Gastrocnemius medialis (tissue), 4 donors: ENCODE measurements at regions of chr12 and their contacts with region 1.

Region 1: DNA sequence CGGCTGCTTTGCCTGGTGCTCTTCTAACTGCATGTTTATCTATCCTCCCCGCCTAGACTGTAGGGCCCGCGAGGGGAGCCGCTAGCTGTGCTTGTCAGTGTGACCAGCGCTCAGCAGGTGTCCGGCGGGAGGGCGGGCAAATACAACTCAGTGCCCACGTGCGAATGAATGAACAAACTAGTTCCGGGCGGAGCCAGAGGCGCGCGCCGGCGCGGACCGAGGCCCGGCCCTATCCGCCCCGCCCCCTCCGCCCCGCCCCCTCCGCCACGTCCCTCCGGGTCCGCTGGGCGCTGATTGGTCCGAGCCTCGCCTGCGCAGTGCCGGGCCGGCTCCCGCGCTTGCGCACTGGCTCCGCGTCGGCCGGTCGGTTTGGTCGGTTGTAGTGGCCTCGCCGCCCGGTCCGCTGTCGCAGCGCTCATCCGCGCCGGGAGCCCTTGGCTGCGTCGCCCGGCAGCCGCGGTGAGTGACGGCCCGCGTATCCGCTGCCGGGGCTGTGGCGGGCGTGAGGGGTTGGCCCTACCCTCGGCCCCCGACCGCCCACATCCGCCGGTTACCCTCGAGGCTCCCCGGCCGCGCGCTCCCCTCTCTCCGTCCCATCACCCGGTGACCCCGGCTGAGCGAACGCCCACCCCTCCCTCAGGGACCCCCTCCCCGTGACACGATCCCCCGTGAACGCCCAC is 60.0 kb downstream of the DDX51 start:
- DNase-seq: peak; percentile 90
- ATAC-seq: peak; percentile 87 to 92
- H3K4me3 ChIP-seq: peak overlapping the region; percentile 72 to 98 (median 87)
- H3K27ac ChIP-seq: peak overlapping the region; percentile 93 to 97 (median 94)
- H3K4me1 ChIP-seq: peaks cover 17 to 22% of the 10 kb centered on the region in 2 donors
- H3K27me3 ChIP-seq: no peaks in the 10 kb centered on the region
- CTCF ChIP-seq: peak in 1 of 5 experiments; percentile 5
- POLR2A ChIP-seq: peak; percentile 94 to 96

Region 2: DNA sequence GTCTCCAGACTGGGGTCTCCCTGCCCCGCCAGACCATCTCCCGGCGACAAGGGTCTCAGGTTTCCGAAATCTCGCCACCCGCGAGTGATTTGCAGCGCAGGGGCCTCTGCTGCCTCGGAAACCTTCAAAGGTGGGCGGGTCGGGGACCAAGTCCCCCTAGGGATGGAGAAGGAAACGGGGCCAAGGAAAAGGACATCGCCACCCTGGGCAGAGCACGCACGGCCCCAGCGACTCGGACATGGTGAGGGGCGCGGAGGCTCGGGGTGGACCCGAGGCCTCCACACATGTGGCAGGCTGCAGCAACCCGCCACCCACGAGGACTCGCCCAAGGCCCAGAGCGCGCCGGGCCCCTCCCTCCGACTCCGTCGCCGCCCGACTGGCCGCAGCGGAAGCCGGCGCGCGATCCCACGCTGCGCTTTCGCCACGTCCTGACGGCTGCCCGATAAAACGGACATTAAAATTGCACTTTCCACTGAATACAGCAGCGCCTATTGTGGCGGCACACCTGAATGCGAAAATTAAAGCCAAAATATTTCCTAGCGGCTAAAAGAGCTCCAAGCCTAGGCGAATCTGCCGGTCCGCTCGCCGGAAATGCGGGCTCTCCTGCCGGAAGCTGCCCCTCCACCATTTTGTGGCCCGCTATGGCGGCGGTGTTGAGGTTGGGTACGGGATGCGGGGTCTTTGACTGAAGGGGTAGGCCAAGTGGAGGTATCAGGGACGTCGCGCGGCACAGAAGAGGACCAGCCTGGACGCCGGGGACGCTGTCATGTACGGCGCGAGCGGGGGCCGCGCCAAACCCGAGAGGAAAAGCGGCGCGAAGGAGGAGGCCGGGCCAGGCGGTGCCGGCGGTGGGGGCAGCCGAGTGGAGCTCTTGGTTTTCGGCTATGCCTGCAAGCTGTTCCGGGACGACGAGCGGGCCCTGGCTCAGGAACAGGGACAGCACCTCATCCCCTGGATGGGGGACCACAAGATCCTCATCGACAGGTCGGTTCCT is 373.3 kb before region 1 on chr12 and contains the start of gene SFSWAP:
- in situ Hi-C with region 1: no loop called
- intact Hi-C with region 1: loop called (anchors 5 kb)
- DNase-seq: peak; percentile 46 to 50
- ATAC-seq: peak; percentile 93 to 95
- H3K4me3 ChIP-seq: peak within 1 kb of the TSS; percentile 80 to 99 (median 97)
- H3K27ac ChIP-seq: peak within 1 kb of the TSS; percentile 87 to 97 (median 90)
- H3K4me1 ChIP-seq: peaks cover 23 to 24% of the 10 kb centered on the region in 2 donors
- H3K27me3 ChIP-seq: no peaks in the 10 kb centered on the region
- CTCF ChIP-seq: peak in 1 of 5 experiments; percentile 13
- POLR2A ChIP-seq: peak; percentile 52 to 75
- total RNA-seq, gene SFSWAP: 18.0 to 29.7 (median 25.4) TPM

Region 3: GRCh38 chr12:132040906-132041606 is 43.0 kb before region 1 on chr12:
- in situ Hi-C with region 1: no loop called
- intact Hi-C with region 1: no loop called
- DNase-seq: no peak
- ATAC-seq: no peak
- H3K4me3 ChIP-seq: no peak overlapping the region
- H3K27ac ChIP-seq: no peak overlapping the region
- H3K4me1 ChIP-seq: no peaks in the 10 kb centered on the region
- H3K27me3 ChIP-seq: no peaks in the 10 kb centered on the region
- CTCF ChIP-seq: no peak
- POLR2A ChIP-seq: no peak